ENCODE measurements at regions of chr1 and their contacts with region 1.

Region 1: GRCh38 chr1:235455097-235455496 is 49.2 kb downstream of the B3GALNT2 start:
- DNase-seq: no peak
- H3K4me3 ChIP-seq: no peak overlapping the region
- H3K27me3 ChIP-seq: no peaks in the 10 kb centered on the region
- CTCF ChIP-seq: no peak

Region 2: DNA sequence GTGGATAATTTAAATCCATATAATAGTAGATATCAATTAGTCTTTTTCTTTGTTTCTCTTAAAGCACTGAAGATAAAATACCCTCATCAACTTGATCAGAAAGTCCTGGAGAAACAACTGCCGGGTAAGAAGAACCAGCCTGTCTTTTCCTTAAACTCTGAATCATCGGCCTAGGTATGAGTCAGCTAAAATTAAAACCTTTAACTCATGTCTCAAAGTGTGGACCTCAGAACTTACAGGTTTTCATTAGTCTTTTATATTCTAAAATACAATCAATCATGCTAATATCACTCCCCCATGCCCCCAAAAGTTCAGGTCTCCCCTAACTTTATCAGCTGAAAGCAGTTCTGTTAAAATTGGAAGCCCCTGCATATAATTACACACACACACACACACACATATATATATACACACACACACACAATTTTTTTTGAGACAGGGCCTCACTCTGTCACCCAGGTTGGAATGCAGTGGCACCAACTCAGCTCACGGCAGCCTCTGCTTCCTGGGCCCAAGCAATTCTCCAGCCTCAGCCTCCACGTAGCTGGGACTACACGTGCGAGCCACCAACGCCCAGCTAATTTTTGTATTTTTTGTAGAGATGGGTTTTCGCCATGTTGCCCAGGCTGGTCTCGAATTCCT is 12.2 kb before region 1 on chr1:
- CTCF ChIA-PET with region 1: no interaction called
- POLR2A ChIA-PET with region 1: interaction called, 11 read pairs
- DNase-seq: peak; percentile 35
- H3K4me3 ChIP-seq: no peak overlapping the region
- H3K27me3 ChIP-seq: no peaks in the 10 kb centered on the region
- CTCF ChIP-seq: no peak